ENCODE measurements at regions of chr2 and their contacts with region 1.

Region 1: DNA sequence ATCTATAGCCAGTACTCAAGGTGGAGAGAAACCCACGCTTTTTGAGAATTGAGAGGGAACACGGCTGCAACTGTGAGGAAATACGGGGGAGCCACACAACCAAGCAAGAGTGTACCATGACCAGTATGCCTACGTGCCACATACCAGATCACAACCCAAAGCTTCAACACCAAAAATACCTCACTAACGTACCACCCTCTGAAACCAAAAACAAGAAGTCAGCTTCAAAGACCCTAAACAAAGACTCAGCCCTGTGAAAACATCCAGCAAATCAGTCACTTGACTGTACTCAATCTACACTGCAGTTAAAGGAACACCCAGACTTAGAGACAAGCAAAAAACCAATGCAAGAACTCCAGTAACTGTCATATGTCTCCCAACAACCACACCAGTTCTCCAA is 17.0 kb downstream of the RNU4ATAC start:
- DNase-seq: no peak
- ATAC-seq: no peak
- H3K4me3 ChIP-seq: no peak overlapping the region
- H3K27ac ChIP-seq: peak overlapping the region in 3 of 10 donors; percentile 12 to 43 (median 17)
- H3K4me1 ChIP-seq: peaks cover 0 to 63% (median 30%) of the 10 kb centered on the region in 9 donors
- H3K27me3 ChIP-seq: no peaks in the 10 kb centered on the region
- CTCF ChIP-seq: no peak

Region 2: GRCh38 chr2:121530212-121530705 is 17.4 kb before region 1 on chr2:
- intact Hi-C with region 1: no loop called
- DNase-seq: peak; percentile 82 to 83
- ATAC-seq: peak; percentile 83 to 92 (median 86)
- H3K4me3 ChIP-seq: peak overlapping the region; percentile 61 to 84 (median 73)
- H3K27ac ChIP-seq: peak overlapping the region; percentile 95 to 99 (median 96)
- H3K4me1 ChIP-seq: peaks cover 4 to 86% (median 61%) of the 10 kb centered on the region in 9 donors
- H3K27me3 ChIP-seq: no peaks in the 10 kb centered on the region
- CTCF ChIP-seq: no peak

Region 3: DNA sequence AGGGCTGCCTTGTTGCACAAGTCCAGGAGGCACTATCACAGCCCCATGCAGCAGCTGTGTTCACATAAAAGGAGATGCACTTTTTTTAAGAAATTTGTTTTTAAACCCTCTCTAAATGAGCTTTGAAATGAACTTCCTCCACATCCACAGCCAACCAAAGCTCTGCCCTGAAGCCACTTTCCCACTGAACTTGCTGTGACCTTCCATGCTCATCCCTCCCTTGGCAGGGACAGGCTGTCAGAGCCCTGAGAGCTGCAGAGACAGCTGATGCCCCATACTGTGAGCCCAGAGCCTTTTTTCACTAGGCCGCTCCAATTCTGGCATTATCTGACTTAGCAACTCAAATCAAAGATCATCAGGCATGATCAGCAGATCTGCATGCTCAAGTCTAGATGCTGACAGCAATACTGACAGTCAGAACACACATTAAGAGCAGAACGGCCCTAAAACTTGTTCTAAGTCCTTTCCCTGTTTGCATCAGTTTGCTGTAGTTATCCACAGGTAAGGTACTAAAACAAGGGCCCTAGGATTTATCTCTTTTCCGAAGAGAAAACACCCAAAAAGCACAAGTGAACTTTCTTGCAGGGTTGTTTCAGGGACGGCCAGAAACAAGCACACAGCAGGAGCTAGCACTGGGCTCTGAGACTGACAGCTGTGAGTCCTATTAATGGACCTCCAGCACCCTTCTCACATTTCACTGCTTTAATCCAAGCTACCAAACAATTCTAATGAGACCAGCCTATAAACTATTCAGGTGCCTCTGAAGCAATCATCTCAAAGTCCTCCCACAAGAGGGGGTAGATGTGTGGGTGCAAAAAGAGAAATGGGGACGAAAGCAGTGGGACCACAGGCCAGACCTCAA is 18.0 kb after region 1 on chr2:
- intact Hi-C with region 1: loop called in 1 of 10 experiments (anchors 1 kb)
- DNase-seq: peak in 1 of 2 donors; percentile 28
- ATAC-seq: peak; percentile 69 to 89 (median 82)
- H3K4me3 ChIP-seq: no peak overlapping the region
- H3K27ac ChIP-seq: peak overlapping the region in 8 of 10 donors; percentile 14 to 79 (median 52)
- H3K4me1 ChIP-seq: peaks cover 14 to 85% (median 70%) of the 10 kb centered on the region in 9 donors
- H3K27me3 ChIP-seq: no peaks in the 10 kb centered on the region
- CTCF ChIP-seq: no peak

Region 4: DNA sequence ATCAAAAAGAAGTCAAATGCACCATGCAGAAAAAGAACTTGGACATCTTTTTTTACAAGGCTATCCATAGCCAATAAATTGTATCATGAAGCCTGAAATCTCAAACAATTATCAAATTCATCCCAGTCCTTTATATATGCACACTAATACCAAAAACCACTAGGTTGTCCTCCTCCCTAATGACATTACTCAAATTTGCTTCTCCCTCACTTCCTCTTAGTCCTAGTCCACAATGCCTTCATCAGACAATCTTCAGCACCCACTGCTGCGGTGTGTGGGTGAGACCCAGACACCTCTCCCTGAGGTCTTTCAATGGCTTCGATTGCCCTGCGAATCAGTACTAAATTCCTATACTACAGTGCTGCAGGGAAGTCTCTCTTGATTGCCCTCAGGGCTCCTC is 43.6 kb after region 1 on chr2:
- intact Hi-C with region 1: loop called in 2 of 10 experiments (anchors 5 to 10 kb)
- DNase-seq: no peak
- ATAC-seq: no peak
- H3K4me3 ChIP-seq: no peak overlapping the region
- H3K27ac ChIP-seq: no peak overlapping the region
- H3K4me1 ChIP-seq: peaks cover 2 to 34% (median 17%) of the 10 kb centered on the region in 9 donors
- H3K27me3 ChIP-seq: no peaks in the 10 kb centered on the region
- CTCF ChIP-seq: no peak